ENCODE measurements at regions of chr7 and their contacts with region 1.

Region 1: GRCh38 chr7:155190688-155191087 is 107.0 kb upstream of the INSIG1 start:
- DNase-seq: peak; percentile 68
- ATAC-seq: peak; percentile 85
- H3K4me3 ChIP-seq: no peak overlapping the region
- H3K4me3 Mint-ChIP-seq: no peak overlapping the region
- H3K27ac ChIP-seq: no peak overlapping the region
- H3K27ac Mint-ChIP-seq: no peak overlapping the region
- H3K4me1 ChIP-seq: peaks cover 4 to 5% of the 10 kb centered on the region in 2 donors
- H3K4me1 Mint-ChIP-seq: peaks cover 2% of the 10 kb centered on the region
- H3K27me3 ChIP-seq: peaks cover 0 to 4% (median 2%) of the 10 kb centered on the region in 4 experiments
- H3K27me3 Mint-ChIP-seq: peaks cover 10% of the 10 kb centered on the region
- CTCF ChIP-seq: peak; percentile 86

Region 2: GRCh38 chr7:155205368-155206317 is 15.0 kb after region 1 on chr7:
- CTCF ChIA-PET with region 1: interaction called, 10 read pairs
- POLR2A ChIA-PET with region 1: no interaction called
- intact Hi-C with region 1: no loop called
- DNase-seq: peak; percentile 91
- ATAC-seq: peak; percentile 84
- H3K4me3 ChIP-seq: peak overlapping the region; percentile 33 to 61 (median 55)
- H3K4me3 Mint-ChIP-seq: peak overlapping the region; percentile 88
- H3K27ac ChIP-seq: peak overlapping the region; percentile 42 to 87
- H3K27ac Mint-ChIP-seq: peak overlapping the region; percentile 89
- H3K4me1 ChIP-seq: peaks cover 19 to 23% of the 10 kb centered on the region in 2 donors
- H3K4me1 Mint-ChIP-seq: peaks cover 20% of the 10 kb centered on the region
- H3K27me3 ChIP-seq: no peaks in the 10 kb centered on the region
- H3K27me3 Mint-ChIP-seq: no peaks in the 10 kb centered on the region
- CTCF ChIP-seq: no peak

Region 3: GRCh38 chr7:155269766-155270585 is 79.3 kb after region 1 on chr7:
- CTCF ChIA-PET with region 1: no interaction called
- POLR2A ChIA-PET with region 1: no interaction called
- intact Hi-C with region 1: no loop called
- DNase-seq: no peak
- ATAC-seq: no peak
- H3K4me3 ChIP-seq: no peak overlapping the region
- H3K4me3 Mint-ChIP-seq: no peak overlapping the region
- H3K27ac ChIP-seq: no peak overlapping the region
- H3K27ac Mint-ChIP-seq: no peak overlapping the region
- H3K4me1 ChIP-seq: no peaks in the 10 kb centered on the region
- H3K4me1 Mint-ChIP-seq: no peaks in the 10 kb centered on the region
- H3K27me3 ChIP-seq: peaks cover 0 to 2% (median 1%) of the 10 kb centered on the region in 4 experiments
- H3K27me3 Mint-ChIP-seq: peaks cover 18% of the 10 kb centered on the region
- CTCF ChIP-seq: no peak

Region 4: DNA sequence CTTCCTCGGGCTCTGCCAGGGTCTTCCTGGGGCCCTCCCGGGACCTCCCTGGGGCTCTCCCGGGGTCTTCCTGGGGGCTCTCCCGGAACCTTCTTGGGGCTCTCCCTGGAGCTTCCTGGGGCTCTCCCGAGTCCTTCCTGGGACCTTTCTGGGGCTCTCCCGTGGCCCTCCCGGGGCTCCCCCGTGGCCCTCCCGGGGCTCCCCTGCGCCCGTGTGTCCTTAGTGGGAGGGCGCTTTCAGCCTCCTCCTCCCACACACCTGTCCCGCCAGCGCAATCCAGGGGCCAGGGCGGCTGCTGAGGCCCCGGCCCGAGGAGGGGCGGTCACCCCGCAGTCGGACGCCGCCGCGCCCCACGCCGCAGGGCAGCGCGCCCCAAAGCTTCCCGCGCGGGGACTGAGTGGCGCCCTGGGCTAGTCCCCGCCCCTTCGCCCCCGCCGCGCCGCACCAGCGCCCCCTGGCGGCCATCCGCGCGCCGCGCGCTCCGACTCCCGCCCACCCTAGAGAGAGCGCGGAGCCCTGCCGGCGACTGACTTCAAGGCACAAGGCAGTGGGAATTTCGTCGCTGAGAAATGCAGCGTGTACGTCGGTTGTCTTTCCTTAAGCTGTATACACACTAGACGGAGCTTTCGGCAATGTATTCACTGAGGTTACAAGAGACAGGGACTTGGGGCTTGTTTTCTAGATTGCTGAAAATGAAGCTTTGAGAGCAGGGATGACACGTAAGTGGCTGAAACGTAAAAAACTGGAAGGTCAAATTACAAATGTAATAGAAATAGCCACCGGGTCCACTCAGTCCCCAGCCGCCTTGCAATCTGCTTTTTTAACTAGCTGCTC is 154.1 kb after region 1 on chr7:
- CTCF ChIA-PET with region 1: interaction called, 50 read pairs
- POLR2A ChIA-PET with region 1: no interaction called
- intact Hi-C with region 1: loop called (anchors 1 kb)
- DNase-seq: peak; percentile 88
- ATAC-seq: peak; percentile 91
- H3K4me3 ChIP-seq: peak overlapping the region in 4 of 5 experiments; percentile 25 to 58 (median 52)
- H3K4me3 Mint-ChIP-seq: peak overlapping the region; percentile 82
- H3K27ac ChIP-seq: no peak overlapping the region
- H3K27ac Mint-ChIP-seq: peak overlapping the region; percentile 71
- H3K4me1 ChIP-seq: peaks cover 12 to 13% of the 10 kb centered on the region in 2 donors
- H3K4me1 Mint-ChIP-seq: peaks cover 5% of the 10 kb centered on the region
- H3K27me3 ChIP-seq: peaks cover 0 to 26% (median 6%) of the 10 kb centered on the region in 4 experiments
- H3K27me3 Mint-ChIP-seq: peaks cover 4% of the 10 kb centered on the region
- CTCF ChIP-seq: peak; percentile 89

Measured in B cell (primary cell).